BJ (cell line): ENCODE measurements at regions of chr2 and their contacts with region 1.

Region 1: DNA sequence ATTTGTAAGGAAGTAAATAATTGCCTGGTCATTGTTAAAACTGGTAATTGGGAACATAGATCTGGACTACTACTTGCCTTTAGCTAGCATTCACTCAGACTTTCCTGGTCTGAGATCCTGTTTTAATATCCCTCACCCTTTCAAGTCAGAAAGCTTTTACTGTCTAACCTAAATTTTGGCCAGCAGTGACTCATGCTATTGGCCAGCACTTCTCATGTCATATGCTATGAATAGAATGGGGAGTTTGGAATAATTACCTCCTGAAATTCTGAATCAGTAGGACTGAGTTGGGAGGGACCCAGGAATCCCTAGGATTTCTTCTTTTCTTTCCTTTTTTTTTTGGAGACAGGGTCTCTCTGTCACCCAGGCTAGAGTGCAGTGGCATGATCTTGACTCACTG is 19.3 kb downstream of the STK36 start:
- DNase-seq: no peak
- H3K4me3 ChIP-seq: no peak overlapping the region
- H3K27me3 ChIP-seq: no peaks in the 10 kb centered on the region
- CTCF ChIP-seq: no peak

Region 2: DNA sequence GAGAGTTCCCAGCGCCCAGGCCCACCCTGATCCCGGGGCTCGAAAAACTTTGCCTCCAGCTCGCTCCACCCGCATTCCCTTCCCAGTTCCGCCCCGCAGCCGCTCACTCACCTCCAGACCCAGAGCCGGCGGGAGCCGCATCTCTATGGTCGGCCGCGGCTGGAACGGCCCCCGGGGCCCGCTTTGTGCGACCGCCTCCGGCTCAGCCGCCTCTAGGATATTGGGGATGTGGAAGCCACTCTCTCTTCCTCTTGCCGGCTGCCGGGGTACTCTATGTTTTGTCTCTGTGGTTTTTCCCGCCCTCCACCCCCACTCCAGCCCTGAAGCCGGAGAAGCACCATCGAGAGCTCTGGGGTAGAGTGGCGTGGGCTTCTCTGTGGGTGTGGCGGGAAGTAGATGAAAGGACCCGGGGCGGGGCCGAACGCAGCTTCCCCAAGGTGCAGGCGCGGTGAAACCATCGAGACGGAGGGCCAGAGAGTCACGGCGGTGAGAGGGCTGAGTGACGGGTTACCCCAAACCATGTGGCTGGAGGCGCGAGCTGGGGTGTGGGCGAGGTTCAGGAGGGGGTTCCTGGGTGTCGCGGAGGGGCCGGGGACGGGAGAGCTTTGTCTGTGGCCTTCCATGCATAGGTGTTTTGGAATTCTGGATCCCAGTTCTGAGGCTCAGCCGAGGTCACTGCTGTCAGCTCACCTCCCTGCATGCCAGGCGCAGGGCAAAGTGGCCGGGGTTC is 31.8 kb before region 1 on chr2 and contains the starts of genes BCS1L and ZNF142:
- CTCF ChIA-PET with region 1: interaction called, 11 read pairs
- POLR2A ChIA-PET with region 1: interaction called, 3 read pairs
- DNase-seq: peak; percentile 45
- H3K4me3 ChIP-seq: peak within 1 kb of the TSS; percentile 89
- H3K27me3 ChIP-seq: no peaks in the 10 kb centered on the region
- CTCF ChIP-seq: no peak
- polyA plus RNA-seq, gene BCS1L: 34.1 and 49.0 TPM in 2 replicates
- polyA plus RNA-seq, gene ZNF142: 2.9 and 7.1 TPM in 2 replicates

Region 3: DNA sequence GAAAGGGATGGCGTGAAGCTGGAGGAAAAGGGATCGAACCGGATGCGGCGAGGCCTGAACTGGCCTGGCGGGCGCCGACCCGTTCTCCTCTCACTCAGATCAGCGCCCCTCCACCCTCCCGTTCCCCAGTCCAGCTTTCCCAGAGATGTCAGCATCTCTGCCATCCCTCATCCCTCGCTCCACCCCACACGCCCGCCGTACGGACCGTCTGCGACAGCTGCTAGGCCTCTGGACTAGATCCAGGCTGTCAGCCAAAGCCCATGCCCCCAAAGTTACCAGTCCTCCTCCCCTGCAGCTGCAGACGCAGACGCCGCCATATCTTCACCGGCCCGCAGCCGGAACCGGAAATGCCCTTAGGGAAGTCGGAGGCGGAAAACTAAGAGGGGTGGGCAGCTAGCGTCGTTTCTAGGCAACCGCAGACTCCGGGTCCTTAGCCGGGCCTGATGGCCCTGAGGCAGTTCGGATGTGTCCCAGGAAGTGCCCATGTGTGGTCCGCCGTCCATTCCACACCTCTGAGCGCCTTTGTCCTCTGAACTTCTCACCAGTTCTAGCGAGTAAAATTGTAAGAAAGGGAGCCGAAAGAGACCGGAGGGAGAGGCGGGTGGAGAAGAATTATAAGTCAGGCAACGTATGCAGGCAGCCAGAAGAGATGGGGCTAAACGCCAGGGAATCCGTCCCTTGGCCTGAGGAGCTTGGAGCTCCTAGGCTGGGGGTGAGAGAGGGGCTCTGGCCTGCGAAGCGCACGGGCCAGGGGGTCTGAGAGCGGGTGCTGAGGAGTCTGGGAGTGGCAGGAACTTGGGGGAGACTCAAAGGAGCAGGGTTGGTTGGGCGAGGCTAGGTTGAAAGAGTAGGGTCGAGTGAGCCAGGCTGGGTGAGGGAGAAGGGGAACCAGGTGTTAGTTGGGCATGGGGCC is 19.3 kb before region 1 on chr2 and contains the starts of genes RNF25 and STK36:
- CTCF ChIA-PET with region 1: interaction called, 15 read pairs
- POLR2A ChIA-PET with region 1: interaction called, 3 read pairs
- DNase-seq: peak; percentile 63
- H3K4me3 ChIP-seq: peak within 1 kb of the TSS; percentile 95
- H3K27me3 ChIP-seq: no peaks in the 10 kb centered on the region
- CTCF ChIP-seq: no peak
- polyA plus RNA-seq, gene RNF25: 78.2 and 91.6 TPM in 2 replicates
- polyA plus RNA-seq, gene STK36: 38.1 and 58.7 TPM in 2 replicates

Region 4: GRCh38 chr2:218701806-218702205 is 10.6 kb after region 1 on chr2:
- CTCF ChIA-PET with region 1: interaction called, 12 read pairs
- POLR2A ChIA-PET with region 1: no interaction called
- DNase-seq: no peak
- H3K4me3 ChIP-seq: no peak overlapping the region
- H3K27me3 ChIP-seq: no peaks in the 10 kb centered on the region
- CTCF ChIP-seq: no peak

Region 5: DNA sequence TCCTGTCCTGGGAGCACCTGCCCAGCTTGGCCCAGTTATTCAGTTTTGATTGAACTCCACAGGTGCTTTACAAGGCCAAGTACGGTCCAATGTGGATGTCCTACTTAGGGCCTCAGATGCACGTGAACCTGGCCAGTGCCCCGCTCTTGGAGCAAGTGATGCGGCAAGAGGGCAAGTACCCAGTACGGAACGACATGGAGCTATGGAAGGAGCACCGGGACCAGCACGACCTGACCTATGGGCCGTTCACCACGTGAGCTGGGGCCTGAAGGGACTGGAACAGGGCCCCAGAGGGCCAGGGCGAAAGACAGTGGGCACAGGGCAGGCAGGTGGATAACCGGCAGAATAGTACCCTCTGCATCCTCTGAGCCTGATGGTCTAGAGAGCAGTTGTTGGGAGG is 118.3 kb after region 1 on chr2:
- CTCF ChIA-PET with region 1: no interaction called
- POLR2A ChIA-PET with region 1: interaction called, 11 read pairs
- DNase-seq: no peak
- H3K4me3 ChIP-seq: no peak overlapping the region
- H3K27me3 ChIP-seq: no peaks in the 10 kb centered on the region
- CTCF ChIP-seq: no peak